ENCODE measurements at regions of chr12 and their contacts with region 1.

Region 1: GRCh38 chr12:8544295-8544694 is 3.6 kb upstream of the CLEC4E start:
- DNase-seq: peak; percentile 83
- ATAC-seq: peak; percentile 76
- H3K4me3 Mint-ChIP-seq: no peak overlapping the region
- H3K27ac Mint-ChIP-seq: no peak overlapping the region
- H3K4me1 Mint-ChIP-seq: peaks cover 9% of the 10 kb centered on the region
- H3K27me3 Mint-ChIP-seq: peaks cover 43% of the 10 kb centered on the region

Region 2: DNA sequence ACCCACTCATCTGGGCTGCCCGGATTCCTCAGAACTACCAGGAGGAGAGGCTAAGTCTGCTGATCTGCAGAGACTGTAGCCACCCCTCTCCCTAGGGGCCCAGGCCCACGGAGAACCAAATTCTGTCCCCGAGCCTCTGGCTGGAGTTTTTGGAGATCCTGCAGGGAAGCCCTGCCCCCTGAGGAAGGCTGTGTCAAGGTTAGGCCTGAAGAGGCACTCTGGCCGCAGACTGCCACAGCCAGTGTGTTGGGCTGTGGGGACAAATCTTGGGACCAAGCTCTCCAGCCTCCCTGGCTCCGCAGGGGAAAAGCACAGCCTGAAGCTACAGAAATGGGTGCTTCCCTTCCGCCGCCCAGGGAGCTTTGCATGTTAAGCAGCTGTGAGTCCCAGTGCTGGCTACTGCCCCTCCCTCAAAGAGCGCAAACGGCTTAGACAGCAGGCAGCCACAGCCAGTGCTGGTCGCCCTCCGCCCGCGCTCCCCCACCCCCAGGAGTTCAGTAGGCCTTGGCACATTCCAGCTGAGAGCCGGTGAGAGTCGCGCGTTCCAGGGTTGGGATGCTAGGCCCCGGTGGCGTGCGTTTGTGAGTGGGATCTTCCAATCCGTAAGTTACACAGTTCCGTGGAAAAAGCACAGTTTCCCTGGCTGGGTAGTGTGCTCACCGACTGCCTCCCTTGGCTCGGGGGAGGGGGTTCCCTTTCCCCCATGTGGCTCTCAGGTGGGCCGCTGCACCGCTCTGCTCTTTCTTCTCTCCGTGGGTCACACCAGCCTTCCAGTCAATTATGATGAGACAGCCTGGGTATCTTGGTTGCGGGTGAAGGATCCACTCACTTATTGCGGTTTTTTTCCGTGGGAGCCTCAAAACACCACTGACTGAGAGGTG is 16.8 kb before region 1 on chr12:
- CTCF ChIA-PET with region 1: interaction called, 20 read pairs
- POLR2A ChIA-PET with region 1: no interaction called
- DNase-seq: no peak
- ATAC-seq: no peak
- H3K4me3 Mint-ChIP-seq: no peak overlapping the region
- H3K27ac Mint-ChIP-seq: no peak overlapping the region
- H3K4me1 Mint-ChIP-seq: no peaks in the 10 kb centered on the region
- H3K27me3 Mint-ChIP-seq: peaks cover 50% of the 10 kb centered on the region

Region 3: GRCh38 chr12:8577879-8578278 is 33.6 kb after region 1 on chr12:
- CTCF ChIA-PET with region 1: interaction called, 18 read pairs
- POLR2A ChIA-PET with region 1: no interaction called
- DNase-seq: no peak
- ATAC-seq: no peak
- H3K4me3 Mint-ChIP-seq: no peak overlapping the region
- H3K27ac Mint-ChIP-seq: no peak overlapping the region
- H3K4me1 Mint-ChIP-seq: no peaks in the 10 kb centered on the region
- H3K27me3 Mint-ChIP-seq: peaks cover 2% of the 10 kb centered on the region

Region 4: DNA sequence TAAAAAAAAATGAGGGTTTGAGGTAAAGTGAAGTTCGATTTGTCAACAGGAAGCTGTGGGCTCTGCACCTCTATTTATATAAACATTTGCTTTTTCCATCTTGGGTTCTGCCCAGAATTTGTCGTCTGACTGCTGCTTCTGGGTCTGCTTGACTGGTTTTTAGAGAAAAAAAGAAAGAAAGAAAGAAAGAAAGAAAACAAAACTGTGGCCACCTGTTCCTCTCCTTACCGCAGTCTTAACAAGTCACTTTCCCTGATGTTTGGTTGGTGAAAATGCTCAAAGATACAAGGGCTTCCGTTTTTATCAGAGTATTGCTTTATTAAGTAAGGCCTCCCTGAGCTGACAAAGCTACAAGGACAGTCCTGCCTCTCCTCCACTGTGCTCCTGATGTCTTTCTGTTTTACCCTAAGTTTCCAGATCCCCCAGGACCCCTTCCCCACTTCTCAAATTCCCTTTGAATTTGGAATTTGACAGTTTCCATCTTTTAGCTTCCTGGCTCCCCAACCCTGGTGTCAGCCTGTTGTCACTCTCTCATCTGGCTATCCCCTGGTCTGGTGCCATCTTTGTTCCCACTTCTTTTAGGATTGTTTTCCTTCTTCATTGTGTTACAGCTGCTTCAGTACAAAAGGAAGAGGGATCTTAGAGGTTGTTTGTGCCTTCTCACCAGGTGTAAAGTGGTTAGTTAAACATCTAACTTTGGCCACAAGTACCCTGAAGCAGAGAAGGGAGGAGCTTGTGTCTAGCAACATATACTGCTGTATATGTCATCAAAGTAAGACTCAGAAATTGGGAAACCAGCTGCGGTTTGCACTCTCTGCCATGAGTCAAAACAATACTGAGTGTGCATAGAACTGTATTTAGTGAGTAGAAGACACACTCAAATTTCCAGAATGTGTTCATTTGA is 100.3 kb after region 1 on chr12:
- CTCF ChIA-PET with region 1: interaction called, 18 read pairs
- POLR2A ChIA-PET with region 1: interaction called, 3 read pairs
- DNase-seq: peak; percentile 81
- ATAC-seq: peak; percentile 89
- H3K4me3 Mint-ChIP-seq: peak overlapping the region; percentile 60
- H3K27ac Mint-ChIP-seq: peak overlapping the region; percentile 91
- H3K4me1 Mint-ChIP-seq: peaks cover 55% of the 10 kb centered on the region
- H3K27me3 Mint-ChIP-seq: peaks cover 6% of the 10 kb centered on the region

Region 5: GRCh38 chr12:8664237-8664913 is 120.1 kb after region 1 on chr12:
- CTCF ChIA-PET with region 1: no interaction called
- POLR2A ChIA-PET with region 1: no interaction called
- DNase-seq: no peak
- ATAC-seq: no peak
- H3K4me3 Mint-ChIP-seq: no peak overlapping the region
- H3K27ac Mint-ChIP-seq: no peak overlapping the region
- H3K4me1 Mint-ChIP-seq: no peaks in the 10 kb centered on the region
- H3K27me3 Mint-ChIP-seq: peaks cover 13% of the 10 kb centered on the region

Region 6: GRCh38 chr12:8890313-8891085 is 346.2 kb after region 1 on chr12:
- CTCF ChIA-PET with region 1: interaction called, 46 read pairs
- POLR2A ChIA-PET with region 1: no interaction called
- DNase-seq: peak; percentile 63
- ATAC-seq: peak; percentile 69
- H3K4me3 Mint-ChIP-seq: peak overlapping the region; percentile 80
- H3K27ac Mint-ChIP-seq: no peak overlapping the region
- H3K4me1 Mint-ChIP-seq: peaks cover 5% of the 10 kb centered on the region
- H3K27me3 Mint-ChIP-seq: peaks cover 13% of the 10 kb centered on the region

Measured in activated CD8-positive, alpha-beta T cell treated with anti-CD3 and anti-CD28 coated beads, Interleukin-2, amount 10 ng/mL, durations not matched to agents 7 days and 5 days (primary cell).